Activated T-helper 2 cell treated with anti-CD3 and anti-CD28 coated beads, Interferon-gamma antibody, Interleukin-2, Interleukin-4, amounts not matched to agents 10 μg/mL and 5 μg/mL and 100 μg/mL, durations not matched to agents 14 hours and 24 hours and 36 hours (primary cell): ENCODE measurements at regions of chr1 and their contacts with region 1.

Region 1: DNA sequence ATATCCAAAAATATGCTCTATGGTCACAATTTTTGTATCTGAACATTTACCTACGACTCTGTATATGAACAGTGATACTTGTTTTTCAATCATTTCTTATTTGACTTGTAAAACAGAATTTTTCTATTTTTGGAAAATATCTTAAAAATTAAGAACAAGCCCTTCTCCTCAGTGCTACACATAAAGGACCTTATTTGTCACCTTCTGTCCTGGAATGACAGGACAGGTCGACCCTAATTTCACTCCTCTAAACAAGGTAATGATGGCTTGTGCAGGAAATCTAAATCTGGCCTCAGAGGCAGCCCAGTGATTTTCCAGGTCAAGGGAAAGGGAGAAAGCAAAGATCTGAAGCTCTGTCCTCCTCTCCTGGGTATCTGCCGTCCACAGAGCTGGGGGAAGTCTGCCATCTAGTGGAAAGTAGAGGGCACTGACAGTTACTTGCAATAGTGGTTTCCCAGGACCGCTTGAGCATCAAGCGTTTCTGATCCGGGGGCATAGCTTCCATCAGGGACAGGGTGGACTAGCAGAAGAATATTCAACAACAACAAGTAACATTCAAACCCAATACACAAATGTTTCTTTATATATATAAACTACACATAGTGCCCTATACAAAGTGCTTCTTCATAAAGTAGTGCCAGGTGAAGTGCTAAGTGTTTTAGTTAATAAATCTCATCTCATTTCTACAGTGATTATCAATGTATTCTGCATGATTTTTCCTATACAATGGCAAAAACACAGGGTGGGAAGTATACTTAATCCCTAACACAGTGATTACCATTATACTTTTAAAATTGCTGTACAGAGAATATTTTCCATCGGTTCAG is 74.6 kb downstream of the SLC25A24 start:
- DNase-seq: peak; percentile 43
- H3K4me3 Mint-ChIP-seq: no peak overlapping the region
- H3K27ac Mint-ChIP-seq: no peak overlapping the region
- H3K4me1 Mint-ChIP-seq: no peaks in the 10 kb centered on the region
- H3K27me3 Mint-ChIP-seq: peaks cover 6% of the 10 kb centered on the region

Region 2: DNA sequence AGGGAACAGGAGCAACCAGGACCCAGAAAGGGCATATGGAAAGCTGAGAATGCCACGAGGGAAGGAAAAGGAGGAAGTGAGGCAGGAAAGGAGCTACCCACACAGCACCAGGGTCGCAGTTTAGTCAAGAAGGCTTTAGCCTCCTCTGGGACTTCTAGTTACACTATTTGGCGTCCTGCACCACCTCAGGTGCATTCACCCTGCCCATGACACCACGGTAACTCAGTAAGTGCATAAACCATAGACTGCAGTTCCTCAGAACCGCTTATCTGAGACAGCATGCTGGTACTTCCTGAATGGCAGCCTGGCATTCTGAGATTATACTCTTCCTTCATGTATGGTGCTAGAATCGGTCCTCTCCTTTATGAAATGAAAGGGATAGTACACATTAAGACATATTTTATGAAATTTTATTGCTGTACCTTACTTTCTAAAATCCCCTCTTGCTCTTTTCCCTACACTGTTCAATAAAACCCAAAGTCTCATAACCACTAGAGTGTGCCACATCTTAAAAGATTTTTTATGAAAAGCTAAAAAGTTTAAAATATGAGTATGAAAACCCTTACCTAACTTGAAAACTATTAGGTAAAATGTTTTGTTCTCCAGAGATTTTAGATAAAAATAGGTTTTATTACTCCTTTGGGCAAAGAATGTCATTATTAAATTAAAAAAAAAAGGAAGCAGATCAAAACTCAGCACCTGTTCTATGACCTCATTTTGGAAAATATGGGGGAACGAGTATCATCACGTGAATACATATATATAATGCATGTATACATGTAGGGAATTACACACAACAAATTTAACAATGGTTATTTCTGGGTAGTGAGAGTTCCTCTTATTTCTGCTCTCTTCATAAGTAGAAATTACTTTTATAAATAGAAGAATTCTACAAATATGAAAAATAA is 227.8 kb before region 1 on chr1:
- intact Hi-C with region 1: loop called (anchors 5 kb)
- DNase-seq: no peak
- H3K4me3 Mint-ChIP-seq: no peak overlapping the region
- H3K27ac Mint-ChIP-seq: no peak overlapping the region
- H3K4me1 Mint-ChIP-seq: peaks cover 21% of the 10 kb centered on the region
- H3K27me3 Mint-ChIP-seq: no peaks in the 10 kb centered on the region

Region 3: GRCh38 chr1:107963601-107964335 is 161.8 kb before region 1 on chr1:
- intact Hi-C with region 1: loop called (anchors 5 kb)
- DNase-seq: peak; percentile 32
- H3K4me3 Mint-ChIP-seq: peak overlapping the region; percentile 83
- H3K27ac Mint-ChIP-seq: peak overlapping the region; percentile 85
- H3K4me1 Mint-ChIP-seq: peaks cover 25% of the 10 kb centered on the region
- H3K27me3 Mint-ChIP-seq: peaks cover 3% of the 10 kb centered on the region

Region 4: DNA sequence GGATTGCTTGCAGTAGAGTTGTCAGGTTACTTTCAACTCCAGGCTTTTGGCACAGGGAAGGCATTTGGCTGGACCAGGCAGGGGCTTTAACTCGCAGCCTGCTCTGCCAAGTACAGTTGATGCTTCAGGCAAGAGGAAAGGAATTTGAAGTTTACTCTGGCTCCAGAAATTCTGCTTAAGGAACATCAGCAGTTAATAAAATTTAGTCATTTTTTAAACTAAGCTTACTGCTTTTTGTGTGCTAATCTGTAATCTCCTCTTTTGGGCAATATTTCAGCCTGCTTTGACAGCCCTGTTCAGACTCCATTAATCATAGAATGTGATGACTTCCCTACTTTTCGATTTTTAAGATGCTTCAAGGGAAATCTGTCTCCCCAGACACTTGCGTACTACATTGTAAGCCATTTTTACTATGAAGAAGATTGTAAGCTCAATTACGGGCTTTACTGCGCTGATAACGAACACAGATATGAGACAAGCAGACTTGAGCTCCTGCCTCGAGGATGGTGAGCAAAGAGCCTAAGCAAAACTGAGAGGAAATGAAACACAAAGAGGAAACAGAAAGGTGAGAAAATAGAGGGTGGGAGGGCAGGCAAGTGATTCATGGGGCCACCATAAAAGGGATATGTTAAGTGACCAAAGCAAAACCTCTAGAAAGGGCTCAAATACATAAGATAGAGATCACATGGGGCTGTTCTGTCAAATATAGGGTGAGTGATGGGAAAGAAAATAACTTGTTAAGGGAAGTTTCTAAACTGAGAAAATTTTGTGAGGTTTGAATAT is 84.0 kb before region 1 on chr1:
- intact Hi-C with region 1: loop called (anchors 5 kb)
- DNase-seq: no peak
- H3K4me3 Mint-ChIP-seq: no peak overlapping the region
- H3K27ac Mint-ChIP-seq: peak overlapping the region; percentile 6
- H3K4me1 Mint-ChIP-seq: peaks cover 26% of the 10 kb centered on the region
- H3K27me3 Mint-ChIP-seq: no peaks in the 10 kb centered on the region

Region 5: GRCh38 chr1:108141621-108142020 is 16.1 kb after region 1 on chr1:
- intact Hi-C with region 1: no loop called
- DNase-seq: no peak
- H3K4me3 Mint-ChIP-seq: no peak overlapping the region
- H3K27ac Mint-ChIP-seq: no peak overlapping the region
- H3K4me1 Mint-ChIP-seq: peaks cover 4% of the 10 kb centered on the region
- H3K27me3 Mint-ChIP-seq: no peaks in the 10 kb centered on the region